ENCODE measurements at regions of chr1 and their contacts with region 1.

Region 1: DNA sequence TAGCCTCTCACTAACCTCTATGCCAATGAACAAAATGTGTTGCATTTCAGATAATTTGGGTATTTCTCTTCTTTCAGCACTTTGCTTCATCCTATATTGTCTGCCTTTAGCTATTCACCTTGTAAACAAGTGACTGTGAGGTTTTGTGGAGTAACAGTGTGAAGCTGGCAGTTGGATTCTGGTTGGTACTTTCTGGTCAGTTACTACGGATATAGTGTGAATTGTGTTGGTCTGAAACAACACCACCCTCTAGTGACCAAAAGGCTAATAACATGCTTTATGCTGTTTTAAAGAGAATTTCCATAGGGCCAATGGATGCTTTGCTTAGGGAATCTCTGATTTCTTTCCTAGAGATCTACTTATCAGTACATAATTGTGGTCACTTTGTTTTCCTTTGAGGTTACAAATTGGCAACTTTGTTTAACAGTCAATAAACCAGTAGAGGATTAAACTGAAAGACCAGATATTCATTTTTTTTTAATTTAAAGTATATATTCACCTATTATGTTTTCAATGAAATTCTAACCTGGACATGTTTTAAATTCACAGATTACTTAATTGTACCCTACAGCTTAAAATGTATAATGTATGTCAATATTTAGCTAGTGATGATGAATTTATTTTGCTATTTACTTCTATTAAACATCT is 2.5 kb upstream of the PTGER3 start:
- DNase-seq: no peak
- H3K4me3 ChIP-seq: no peak overlapping the region
- H3K27ac ChIP-seq: no peak overlapping the region
- H3K4me1 ChIP-seq: no peaks in the 10 kb centered on the region
- H3K27me3 ChIP-seq: no peaks in the 10 kb centered on the region
- CTCF ChIP-seq: peak; percentile 32 to 63 (median 62)
- POLR2A ChIP-seq: no peak

Region 2: GRCh38 chr1:70528590-70529333 is 521.3 kb before region 1 on chr1:
- intact Hi-C with region 1: loop called (anchors 10 kb)
- DNase-seq: peak; percentile 48
- H3K4me3 ChIP-seq: no peak overlapping the region
- H3K27ac ChIP-seq: no peak overlapping the region
- H3K4me1 ChIP-seq: no peaks in the 10 kb centered on the region
- H3K27me3 ChIP-seq: no peaks in the 10 kb centered on the region
- CTCF ChIP-seq: peak in 2 of 3 experiments; percentile 20 to 41
- POLR2A ChIP-seq: no peak

Region 3: DNA sequence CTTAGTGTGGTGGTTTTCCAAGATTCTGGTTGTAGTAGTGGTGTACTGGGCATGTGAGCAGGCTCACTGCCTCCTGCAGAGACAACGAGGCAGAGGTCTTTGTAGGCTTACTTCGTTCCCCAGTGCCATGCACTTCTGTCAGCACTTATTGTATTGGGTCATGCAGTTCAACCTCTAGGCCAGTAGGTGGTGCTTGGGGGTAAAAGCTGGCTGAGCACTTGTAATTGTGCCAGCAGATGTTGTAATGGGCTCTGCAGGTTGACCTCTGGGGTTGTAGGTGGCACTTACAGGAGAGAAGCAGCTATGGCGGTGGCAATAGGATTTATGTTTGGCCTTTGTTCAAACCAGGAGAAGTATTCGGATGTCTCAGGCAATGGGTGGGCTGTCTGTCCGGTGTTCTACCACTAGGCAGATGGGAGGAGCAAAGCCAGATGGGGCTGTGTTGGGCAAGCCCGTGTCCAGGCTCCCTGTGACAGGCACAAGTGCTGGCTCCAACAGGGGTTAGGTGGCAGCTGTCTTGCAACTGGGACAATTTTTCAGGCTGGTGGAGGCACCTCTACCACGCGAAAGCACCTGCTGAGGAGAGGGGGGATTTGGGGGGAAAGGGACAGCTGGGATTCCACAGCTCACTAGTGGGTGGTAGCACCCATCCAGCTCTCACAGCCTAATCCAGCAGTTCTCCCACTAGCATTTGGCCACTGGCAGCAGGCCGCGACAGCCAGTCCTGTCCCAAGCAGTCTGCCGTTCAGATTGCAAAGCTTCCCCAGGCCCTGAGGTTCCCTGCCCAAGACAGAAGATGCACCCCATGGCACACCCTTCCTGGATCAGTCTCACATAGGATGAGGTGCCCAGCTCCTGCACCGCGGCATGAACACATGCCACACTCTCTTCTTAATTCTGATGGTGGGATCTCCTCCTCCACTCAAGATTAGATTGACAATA is 364.5 kb before region 1 on chr1:
- intact Hi-C with region 1: loop called (anchors 10 kb)
- DNase-seq: peak; percentile 77
- H3K4me3 ChIP-seq: no peak overlapping the region
- H3K27ac ChIP-seq: no peak overlapping the region
- H3K4me1 ChIP-seq: no peaks in the 10 kb centered on the region
- H3K27me3 ChIP-seq: no peaks in the 10 kb centered on the region
- CTCF ChIP-seq: peak; percentile 30 to 76 (median 64)
- POLR2A ChIP-seq: no peak